ENCODE measurements at regions of chr11 and their contacts with region 1.

Region 1: GRCh38 chr11:114340311-114341131 is 44.3 kb downstream of the NNMT start:
- DNase-seq: peak; percentile 66 to 67
- H3K4me3 ChIP-seq: no peak overlapping the region
- H3K4me3 Mint-ChIP-seq: no peak overlapping the region
- H3K27ac Mint-ChIP-seq: no peak overlapping the region
- H3K4me1 ChIP-seq: 0 out of 2 replicates have a peak, but pooled peaks cover 8% of the 10 kb centered on the region
- H3K4me1 Mint-ChIP-seq: no peaks in the 10 kb centered on the region
- H3K27me3 ChIP-seq: no peaks in the 10 kb centered on the region
- H3K27me3 Mint-ChIP-seq: peaks cover 9% of the 10 kb centered on the region
- CTCF ChIP-seq: peak; percentile 97 to 98

Region 2: GRCh38 chr11:114183044-114183511 is 157.4 kb before region 1 on chr11:
- CTCF ChIA-PET with region 1: no interaction called
- POLR2A ChIA-PET with region 1: no interaction called
- intact Hi-C with region 1: no loop called
- DNase-seq: no peak
- H3K4me3 ChIP-seq: no peak overlapping the region
- H3K4me3 Mint-ChIP-seq: no peak overlapping the region
- H3K27ac Mint-ChIP-seq: no peak overlapping the region
- H3K4me1 ChIP-seq: peaks cover 22% of the 10 kb centered on the region
- H3K4me1 Mint-ChIP-seq: peaks cover 25% of the 10 kb centered on the region
- H3K27me3 ChIP-seq: no peaks in the 10 kb centered on the region
- H3K27me3 Mint-ChIP-seq: no peaks in the 10 kb centered on the region
- CTCF ChIP-seq: no peak

Region 3: DNA sequence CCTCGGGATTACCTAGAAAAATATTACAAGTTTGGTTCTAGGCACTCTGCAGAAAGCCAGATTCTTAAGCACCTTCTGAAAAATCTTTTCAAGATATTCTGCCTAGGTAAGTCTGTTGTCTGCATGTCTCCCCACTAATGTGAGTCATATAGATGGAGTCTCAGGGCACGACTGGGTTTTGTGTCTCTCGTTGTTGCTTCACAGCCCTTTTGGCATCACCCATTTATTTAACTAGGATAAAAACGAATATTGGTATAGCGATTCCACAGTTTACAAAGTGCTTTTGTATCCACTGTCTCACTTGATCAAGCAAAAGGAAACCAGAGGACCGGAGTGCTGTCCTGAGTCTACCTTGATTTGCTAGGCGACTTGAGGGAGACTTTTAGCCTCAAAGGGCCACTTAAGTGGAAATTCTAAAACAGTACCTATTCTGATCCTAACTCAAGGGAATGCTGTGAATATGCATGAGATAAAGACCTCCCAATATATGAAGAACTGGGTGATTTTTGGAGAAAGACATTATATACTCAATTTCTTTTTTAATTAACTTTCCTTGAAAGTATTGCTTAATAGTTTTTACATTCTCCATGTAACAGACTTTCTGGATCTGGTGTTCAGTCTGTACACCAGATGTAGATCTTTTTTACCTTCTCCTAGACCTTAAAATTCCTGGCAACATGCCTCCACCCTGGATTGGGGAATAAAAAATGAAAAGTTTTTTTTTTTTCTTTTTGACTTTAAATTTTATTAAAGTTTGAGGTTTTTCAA is 43.7 kb before region 1 on chr11:
- CTCF ChIA-PET with region 1: no interaction called
- POLR2A ChIA-PET with region 1: no interaction called
- intact Hi-C with region 1: no loop called
- DNase-seq: no peak
- H3K4me3 ChIP-seq: no peak overlapping the region
- H3K4me3 Mint-ChIP-seq: no peak overlapping the region
- H3K27ac Mint-ChIP-seq: no peak overlapping the region
- H3K4me1 ChIP-seq: peaks cover 18% of the 10 kb centered on the region; the same call in 1 of the 2 replicates
- H3K4me1 Mint-ChIP-seq: peaks cover 7% of the 10 kb centered on the region
- H3K27me3 ChIP-seq: no peaks in the 10 kb centered on the region
- H3K27me3 Mint-ChIP-seq: peaks cover 2% of the 10 kb centered on the region
- CTCF ChIP-seq: no peak

Region 4: GRCh38 chr11:114317787-114318137 is 22.8 kb before region 1 on chr11:
- CTCF ChIA-PET with region 1: interaction called, 6 read pairs
- POLR2A ChIA-PET with region 1: no interaction called
- intact Hi-C with region 1: loop called (anchors 2 kb)
- DNase-seq: peak; percentile 52 to 57
- H3K4me3 ChIP-seq: no peak overlapping the region
- H3K4me3 Mint-ChIP-seq: no peak overlapping the region
- H3K27ac Mint-ChIP-seq: no peak overlapping the region
- H3K4me1 ChIP-seq: peaks cover 20% of the 10 kb centered on the region
- H3K4me1 Mint-ChIP-seq: peaks cover 14% of the 10 kb centered on the region
- H3K27me3 ChIP-seq: no peaks in the 10 kb centered on the region
- H3K27me3 Mint-ChIP-seq: peaks cover 3% of the 10 kb centered on the region
- CTCF ChIP-seq: peak; percentile 32 to 48

Region 5: DNA sequence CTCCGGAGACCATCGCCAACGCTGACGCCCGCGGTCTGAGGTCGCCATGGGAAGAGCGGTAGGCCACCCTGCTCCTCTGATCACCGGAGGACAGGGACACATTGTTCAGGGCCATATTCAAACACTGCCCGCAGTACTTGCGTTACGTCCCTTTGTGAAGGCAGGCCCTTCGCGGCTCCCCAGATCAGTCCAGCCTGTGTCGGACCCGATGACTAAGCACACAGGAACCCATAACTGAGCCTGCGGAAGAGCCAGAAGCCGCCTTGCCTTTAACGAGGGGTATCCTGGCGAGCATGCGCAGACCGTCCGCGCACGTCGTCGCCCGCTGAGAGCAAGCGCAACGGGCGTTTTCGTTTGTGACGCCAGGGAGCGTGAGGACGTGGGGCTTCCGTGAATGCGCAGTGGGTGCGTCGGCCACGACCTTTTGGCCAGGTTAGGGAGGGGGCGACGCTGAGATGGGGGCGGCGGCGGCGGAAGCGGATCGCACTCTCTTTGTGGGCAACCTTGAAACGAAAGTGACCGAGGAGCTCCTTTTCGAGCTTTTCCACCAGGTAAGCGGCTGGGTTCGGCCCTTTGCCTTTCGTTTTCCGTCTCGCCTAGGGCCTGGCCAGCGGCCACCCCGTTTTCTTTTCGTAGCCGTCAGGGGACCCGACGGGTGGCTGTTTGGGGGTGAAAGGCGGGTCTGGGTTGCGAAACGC is 59.8 kb after region 1 on chr11 and contains the starts of genes C11orf71 and RBM7:
- CTCF ChIA-PET with region 1: interaction called, 5 read pairs
- POLR2A ChIA-PET with region 1: interaction called, 3 read pairs
- intact Hi-C with region 1: loop called (anchors 2 kb)
- DNase-seq: peak; percentile 100
- H3K4me3 ChIP-seq: peak within 1 kb of the TSS; percentile 51
- H3K4me3 Mint-ChIP-seq: peak within 1 kb of the TSS; percentile 91
- H3K27ac Mint-ChIP-seq: peak within 1 kb of the TSS; percentile 99
- H3K4me1 ChIP-seq: peaks cover 16% of the 10 kb centered on the region
- H3K4me1 Mint-ChIP-seq: peaks cover 36% of the 10 kb centered on the region
- H3K27me3 ChIP-seq: no peaks in the 10 kb centered on the region
- H3K27me3 Mint-ChIP-seq: no peaks in the 10 kb centered on the region
- CTCF ChIP-seq: peak in 1 of 2 experiments; percentile 33
- total RNA-seq, gene C11orf71: 9.5 and 9.8 TPM in 2 replicates
- total RNA-seq, gene RBM7: 57.6 and 62.6 TPM in 2 replicates

Region 6: GRCh38 chr11:114478768-114479167 is 138.2 kb after region 1 on chr11:
- CTCF ChIA-PET with region 1: no interaction called
- POLR2A ChIA-PET with region 1: no interaction called
- intact Hi-C with region 1: loop called (anchors 2 kb)
- DNase-seq: no peak
- H3K4me3 ChIP-seq: no peak overlapping the region
- H3K4me3 Mint-ChIP-seq: no peak overlapping the region
- H3K27ac Mint-ChIP-seq: no peak overlapping the region
- H3K4me1 ChIP-seq: 0 out of 2 replicates have a peak, but pooled peaks cover 7% of the 10 kb centered on the region
- H3K4me1 Mint-ChIP-seq: no peaks in the 10 kb centered on the region
- H3K27me3 ChIP-seq: no peaks in the 10 kb centered on the region
- H3K27me3 Mint-ChIP-seq: peaks cover 3% of the 10 kb centered on the region
- CTCF ChIP-seq: peak in 1 of 2 experiments; percentile 2

Region 7: GRCh38 chr11:114586797-114587196 is 246.3 kb after region 1 on chr11:
- CTCF ChIA-PET with region 1: no interaction called
- POLR2A ChIA-PET with region 1: no interaction called
- intact Hi-C with region 1: loop called (anchors 2 kb)
- DNase-seq: no peak
- H3K4me3 ChIP-seq: no peak overlapping the region
- H3K4me3 Mint-ChIP-seq: no peak overlapping the region
- H3K27ac Mint-ChIP-seq: no peak overlapping the region
- H3K4me1 ChIP-seq: no peaks in the 10 kb centered on the region
- H3K4me1 Mint-ChIP-seq: no peaks in the 10 kb centered on the region
- H3K27me3 ChIP-seq: no peaks in the 10 kb centered on the region
- H3K27me3 Mint-ChIP-seq: no peaks in the 10 kb centered on the region
- CTCF ChIP-seq: peak; percentile 27

Region 8: GRCh38 chr11:114606003-114606801 is 265.7 kb after region 1 on chr11:
- CTCF ChIA-PET with region 1: no interaction called
- POLR2A ChIA-PET with region 1: no interaction called
- intact Hi-C with region 1: loop called (anchors 5 kb)
- DNase-seq: no peak
- H3K4me3 ChIP-seq: no peak overlapping the region
- H3K4me3 Mint-ChIP-seq: no peak overlapping the region
- H3K27ac Mint-ChIP-seq: no peak overlapping the region
- H3K4me1 ChIP-seq: no peaks in the 10 kb centered on the region
- H3K4me1 Mint-ChIP-seq: no peaks in the 10 kb centered on the region
- H3K27me3 ChIP-seq: no peaks in the 10 kb centered on the region
- H3K27me3 Mint-ChIP-seq: no peaks in the 10 kb centered on the region
- CTCF ChIP-seq: no peak

Region 9: GRCh38 chr11:114762408-114762807 is 421.9 kb after region 1 on chr11:
- CTCF ChIA-PET with region 1: no interaction called
- POLR2A ChIA-PET with region 1: no interaction called
- intact Hi-C with region 1: loop called (anchors 1 kb)
- DNase-seq: peak; percentile 78 to 81
- H3K4me3 ChIP-seq: no peak overlapping the region
- H3K4me3 Mint-ChIP-seq: no peak overlapping the region
- H3K27ac Mint-ChIP-seq: no peak overlapping the region
- H3K4me1 ChIP-seq: no peaks in the 10 kb centered on the region
- H3K4me1 Mint-ChIP-seq: no peaks in the 10 kb centered on the region
- H3K27me3 ChIP-seq: no peaks in the 10 kb centered on the region; the same call in 1 of the 2 replicates
- H3K27me3 Mint-ChIP-seq: peaks cover 23% of the 10 kb centered on the region
- CTCF ChIP-seq: peak; percentile 92 to 98